HEK293 (cell line): ENCODE measurements at regions of chr12 and their contacts with region 1.

Region 1: DNA sequence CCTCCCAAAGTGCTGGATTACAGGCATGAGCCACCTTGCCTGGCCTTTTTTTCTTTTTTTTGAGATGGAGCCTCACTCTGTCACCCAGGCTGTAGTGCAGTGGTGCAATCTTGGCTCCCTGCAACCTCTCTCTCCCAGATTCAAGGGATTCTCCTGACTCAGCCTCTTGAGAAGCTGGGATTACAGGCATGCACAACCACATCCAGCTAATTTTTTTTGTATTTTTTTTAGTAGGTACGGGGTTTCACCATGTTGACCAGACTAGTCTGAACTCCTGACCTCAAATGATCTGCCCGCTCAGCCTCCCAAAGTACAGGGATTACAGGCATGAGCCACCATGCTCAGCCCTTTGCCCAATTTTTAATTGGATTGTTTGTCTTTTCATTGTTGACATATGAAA is 58.0 kb downstream of the SINHCAF start:
- H3K4me3 ChIP-seq: no peak overlapping the region
- H3K27ac ChIP-seq: no peak overlapping the region
- H3K4me1 ChIP-seq: no peaks in the 10 kb centered on the region
- CTCF ChIP-seq: no peak

Region 2: GRCh38 chr12:30985814-30986452 is 282.0 kb before region 1 on chr12:
- CTCF ChIA-PET with region 1: interaction called, 10 read pairs
- POLR2A ChIA-PET with region 1: no interaction called
- H3K4me3 ChIP-seq: no peak overlapping the region
- H3K27ac ChIP-seq: no peak overlapping the region
- H3K4me1 ChIP-seq: no peaks in the 10 kb centered on the region
- CTCF ChIP-seq: peak; percentile 62

Region 3: GRCh38 chr12:31250179-31250578 is 17.8 kb before region 1 on chr12:
- CTCF ChIA-PET with region 1: interaction called, 112 read pairs
- POLR2A ChIA-PET with region 1: no interaction called
- H3K4me3 ChIP-seq: no peak overlapping the region
- H3K27ac ChIP-seq: no peak overlapping the region
- H3K4me1 ChIP-seq: no peaks in the 10 kb centered on the region
- CTCF ChIP-seq: no peak

Region 4: DNA sequence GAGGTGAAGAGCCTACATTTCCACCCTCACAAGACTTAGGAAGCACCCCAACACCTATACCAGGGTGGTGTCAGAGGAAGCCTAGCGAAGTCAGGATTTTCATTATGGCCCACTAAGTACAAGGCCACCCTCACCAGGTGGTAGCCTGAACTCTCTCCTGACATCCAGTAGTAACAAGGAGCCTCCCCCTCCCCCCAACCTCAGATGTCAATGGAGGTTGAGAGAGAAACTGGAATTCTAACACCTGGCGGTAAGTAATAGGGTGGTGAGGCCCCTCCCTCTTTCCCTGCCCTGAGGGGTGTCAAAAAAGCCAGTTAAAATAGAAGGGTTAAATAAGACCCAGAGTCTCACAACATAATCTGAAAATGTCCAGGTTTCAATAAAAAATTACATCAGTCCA is 20.4 kb after region 1 on chr12:
- CTCF ChIA-PET with region 1: interaction called, 15 read pairs
- POLR2A ChIA-PET with region 1: interaction called, 3 read pairs
- H3K4me3 ChIP-seq: no peak overlapping the region
- H3K27ac ChIP-seq: no peak overlapping the region
- H3K4me1 ChIP-seq: no peaks in the 10 kb centered on the region
- CTCF ChIP-seq: no peak

Region 5: GRCh38 chr12:31317471-31318395 is 49.8 kb after region 1 on chr12:
- CTCF ChIA-PET with region 1: interaction called, 13 read pairs
- POLR2A ChIA-PET with region 1: no interaction called
- H3K4me3 ChIP-seq: peak overlapping the region; percentile 33
- H3K27ac ChIP-seq: no peak overlapping the region
- H3K4me1 ChIP-seq: peaks cover 38% of the 10 kb centered on the region
- CTCF ChIP-seq: no peak